Natural killer cell (primary cell): ENCODE measurements at regions of chr6 and their contacts with region 1.

Region 1: GRCh38 chr6:110389689-110390382 is 25.5 kb downstream of the DDO start:
- DNase-seq: no peak
- ATAC-seq: peak; percentile 42 to 82 (median 50)
- H3K4me3 ChIP-seq: no peak overlapping the region
- H3K4me3 Mint-ChIP-seq: peak overlapping the region; percentile 73
- H3K27ac ChIP-seq: peak overlapping the region; percentile 24
- H3K27ac Mint-ChIP-seq: peak overlapping the region; percentile 70 to 73
- H3K4me1 ChIP-seq: peaks cover 7% of the 10 kb centered on the region
- H3K4me1 Mint-ChIP-seq: peaks cover 21 to 26% of the 10 kb centered on the region in 2 donors
- H3K27me3 ChIP-seq: no peaks in the 10 kb centered on the region
- H3K27me3 Mint-ChIP-seq: no peaks in the 10 kb centered on the region
- CTCF ChIP-seq: no peak

Region 2: DNA sequence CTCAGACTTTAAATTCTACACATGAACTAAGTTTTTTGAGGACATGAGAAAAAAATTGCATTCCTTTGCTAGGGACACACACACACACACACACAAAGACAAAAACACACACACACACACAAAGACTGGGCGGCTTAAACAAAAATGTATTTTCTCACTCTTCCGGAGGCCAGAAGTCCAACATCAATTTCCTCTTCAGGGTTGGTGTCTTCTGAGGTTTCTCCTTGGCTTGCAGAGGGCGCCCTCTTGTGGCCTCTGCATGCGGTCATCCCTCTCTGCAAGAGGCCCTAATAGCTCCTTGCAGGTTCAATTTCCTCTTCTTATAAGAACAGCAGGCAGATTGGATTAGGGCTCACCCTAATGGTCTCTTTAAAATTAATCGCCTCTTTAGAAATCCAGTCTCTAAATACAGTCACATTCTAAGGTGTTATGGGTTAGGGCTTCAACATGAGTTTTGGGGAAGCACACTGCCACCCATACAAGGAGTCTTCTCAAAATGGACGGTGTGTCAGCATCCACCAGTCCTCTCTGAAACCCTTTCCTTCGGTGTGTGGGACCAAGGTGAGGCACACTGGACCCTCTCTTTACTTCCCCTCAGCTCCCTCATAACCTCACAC is 350.4 kb before region 1 on chr6:
- intact Hi-C with region 1: loop called (anchors 1 kb)
- DNase-seq: peak; percentile 79 to 91
- ATAC-seq: peak; percentile 87 to 90 (median 89)
- H3K4me3 ChIP-seq: peak overlapping the region; percentile 40
- H3K4me3 Mint-ChIP-seq: peak overlapping the region; percentile 89
- H3K27ac ChIP-seq: peak overlapping the region; percentile 77
- H3K27ac Mint-ChIP-seq: peak overlapping the region; percentile 92 to 98
- H3K4me1 ChIP-seq: peaks cover 38% of the 10 kb centered on the region
- H3K4me1 Mint-ChIP-seq: peaks cover 26 to 36% of the 10 kb centered on the region in 2 donors
- H3K27me3 ChIP-seq: no peaks in the 10 kb centered on the region
- H3K27me3 Mint-ChIP-seq: no peaks in the 10 kb centered on the region
- CTCF ChIP-seq: peak; percentile 73

Region 3: DNA sequence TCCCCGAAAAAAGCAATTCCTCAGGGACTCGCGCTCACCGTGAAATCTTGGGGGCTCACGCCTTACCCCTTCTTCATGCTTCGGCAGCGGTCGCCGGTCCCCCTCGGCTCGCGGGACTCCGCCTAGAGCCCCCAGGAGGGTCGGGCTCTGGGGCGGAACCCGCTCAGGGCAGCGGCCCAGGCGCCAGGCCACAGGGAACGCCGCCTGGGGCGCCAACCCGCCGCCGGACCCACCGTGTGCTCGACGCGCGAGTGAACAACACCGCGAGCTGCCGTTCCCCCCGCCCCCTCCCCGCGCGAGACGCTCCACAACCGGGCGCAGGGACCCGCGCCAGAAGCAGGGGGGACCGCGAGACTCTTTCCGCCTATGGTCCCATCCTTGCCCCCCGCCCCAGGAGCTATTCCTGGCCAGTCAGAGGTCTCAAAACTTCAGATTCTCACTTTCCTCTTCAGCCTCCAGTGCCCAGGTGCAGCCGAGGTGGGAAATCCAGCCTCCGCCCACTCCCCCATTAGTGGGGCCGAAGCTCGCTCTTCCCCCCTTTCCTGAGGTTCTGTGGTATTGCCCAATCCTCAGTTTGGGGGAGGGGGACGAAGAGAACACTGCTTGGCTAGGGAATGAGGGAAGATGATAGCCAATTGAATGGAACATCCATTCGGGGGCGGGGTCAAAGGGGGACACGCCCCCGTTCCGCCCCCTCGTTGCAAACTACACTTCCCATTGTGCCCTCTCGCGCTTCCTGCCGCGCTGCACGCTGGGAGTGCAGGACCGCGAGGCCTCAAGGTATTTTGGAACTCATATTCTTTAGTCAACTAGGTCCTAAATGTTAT is 210.2 kb before region 1 on chr6 and contains the start of gene WASF1:
- intact Hi-C with region 1: loop called (anchors 5 kb)
- DNase-seq: peak; percentile 86 to 95
- ATAC-seq: peak; percentile 91 to 98 (median 94)
- H3K4me3 ChIP-seq: peak within 1 kb of the TSS; percentile 83
- H3K4me3 Mint-ChIP-seq: peak within 1 kb of the TSS; percentile 90
- H3K27ac ChIP-seq: peak within 1 kb of the TSS; percentile 75
- H3K27ac Mint-ChIP-seq: no peak within 1 kb of the TSS
- H3K4me1 ChIP-seq: peaks cover 22% of the 10 kb centered on the region
- H3K4me1 Mint-ChIP-seq: peaks cover 6 to 11% of the 10 kb centered on the region in 2 donors
- H3K27me3 ChIP-seq: peaks cover 9% of the 10 kb centered on the region
- H3K27me3 Mint-ChIP-seq: peaks cover 17 to 19% of the 10 kb centered on the region in 2 donors
- CTCF ChIP-seq: no peak
- total RNA-seq, gene WASF1: 0.25 to 0.90 (median 0.45) TPM

Region 4: GRCh38 chr6:110307368-110307767 is 82.5 kb before region 1 on chr6:
- intact Hi-C with region 1: no loop called
- DNase-seq: no peak
- ATAC-seq: no peak
- H3K4me3 ChIP-seq: no peak overlapping the region
- H3K4me3 Mint-ChIP-seq: no peak overlapping the region
- H3K27ac ChIP-seq: no peak overlapping the region
- H3K27ac Mint-ChIP-seq: no peak overlapping the region
- H3K4me1 ChIP-seq: no peaks in the 10 kb centered on the region
- H3K4me1 Mint-ChIP-seq: peaks cover 11 to 13% of the 10 kb centered on the region in 2 donors
- H3K27me3 ChIP-seq: no peaks in the 10 kb centered on the region
- H3K27me3 Mint-ChIP-seq: peaks cover 0 to 2% of the 10 kb centered on the region in 2 donors
- CTCF ChIP-seq: no peak

Region 5: DNA sequence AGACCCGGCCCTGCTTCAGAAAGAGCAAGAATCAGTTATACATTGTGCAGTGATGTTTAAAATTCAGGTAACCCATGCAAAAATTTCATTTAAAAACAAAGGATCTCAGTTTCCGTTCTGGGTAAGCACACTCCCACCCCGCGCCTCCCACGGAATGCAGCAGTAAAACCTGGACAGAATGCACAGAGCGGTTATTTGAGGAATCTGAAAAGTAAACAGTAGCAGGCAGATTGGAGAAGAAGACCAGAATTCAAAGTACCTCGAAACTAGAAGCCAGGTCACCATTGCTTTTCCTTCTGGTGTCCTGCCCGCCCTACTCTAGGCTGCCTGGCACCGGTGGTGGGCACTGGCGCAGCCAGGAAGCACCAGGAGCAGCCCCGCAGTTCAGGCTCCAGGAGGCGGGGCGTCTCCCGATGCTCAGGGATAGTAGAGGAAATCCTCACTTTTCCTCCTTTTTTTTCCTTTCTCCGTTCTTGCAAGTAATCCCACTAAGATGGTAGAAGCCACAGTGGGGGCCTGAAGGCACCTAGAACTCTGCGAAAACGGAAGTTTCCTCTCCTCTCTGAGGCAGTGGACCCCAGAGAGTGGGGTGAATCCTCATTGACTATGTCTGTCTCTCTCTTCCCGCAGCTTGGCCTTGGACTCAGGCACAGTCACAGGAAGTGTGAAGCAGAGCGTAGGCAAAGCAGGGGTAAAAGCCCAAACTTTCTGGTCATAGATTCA is 60.0 kb before region 1 on chr6:
- intact Hi-C with region 1: no loop called
- DNase-seq: no peak
- ATAC-seq: no peak
- H3K4me3 ChIP-seq: no peak overlapping the region
- H3K4me3 Mint-ChIP-seq: no peak overlapping the region
- H3K27ac ChIP-seq: no peak overlapping the region
- H3K27ac Mint-ChIP-seq: no peak overlapping the region
- H3K4me1 ChIP-seq: no peaks in the 10 kb centered on the region
- H3K4me1 Mint-ChIP-seq: peaks cover 0 to 5% of the 10 kb centered on the region in 2 donors
- H3K27me3 ChIP-seq: no peaks in the 10 kb centered on the region
- H3K27me3 Mint-ChIP-seq: no peaks in the 10 kb centered on the region
- CTCF ChIP-seq: no peak